Activated CD4-positive, alpha-beta T cell treated with anti-CD3 and anti-CD28 coated beads for 36 hours (primary cell): ENCODE measurements at regions of chrX and their contacts with region 1.

Region 1: GRCh38 chrX:100768679-100769338 is 36.9 kb upstream of the SYTL4 start:
- DNase-seq: peak; percentile 89
- ATAC-seq: peak; percentile 49
- H3K4me3 Mint-ChIP-seq: no peak overlapping the region
- H3K27ac Mint-ChIP-seq: no peak overlapping the region
- H3K4me1 Mint-ChIP-seq: no peaks in the 10 kb centered on the region
- H3K27me3 Mint-ChIP-seq: peaks cover 3% of the 10 kb centered on the region

Region 2: DNA sequence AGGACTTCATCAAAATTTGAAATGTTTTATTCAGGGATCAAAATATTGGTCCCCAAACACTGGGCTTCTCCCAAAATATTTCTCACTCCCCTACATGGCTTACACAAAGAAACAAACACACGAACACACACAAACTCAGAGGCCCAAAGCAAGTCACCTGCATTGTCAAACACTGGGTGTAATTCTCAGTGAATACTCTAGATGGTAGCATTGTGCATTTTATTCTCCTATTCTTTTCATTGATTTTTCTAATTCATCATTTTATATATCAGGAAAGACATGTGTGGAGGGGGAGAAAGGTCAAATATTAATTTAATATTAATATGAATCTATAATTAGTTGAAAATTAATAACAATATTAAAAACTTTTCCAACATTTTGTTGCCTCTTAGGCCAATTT is 256.3 kb before region 1 on chrX:
- CTCF ChIA-PET with region 1: interaction called, 12 read pairs
- POLR2A ChIA-PET with region 1: no interaction called
- intact Hi-C with region 1: loop called in 1 of 2 experiments (anchors 2 kb)
- DNase-seq: no peak
- ATAC-seq: no peak
- H3K4me3 Mint-ChIP-seq: no peak overlapping the region
- H3K27ac Mint-ChIP-seq: no peak overlapping the region
- H3K4me1 Mint-ChIP-seq: no peaks in the 10 kb centered on the region
- H3K27me3 Mint-ChIP-seq: peaks cover 4% of the 10 kb centered on the region

Region 3: GRCh38 chrX:100685284-100685996 is 83.4 kb before region 1 on chrX:
- CTCF ChIA-PET with region 1: interaction called, 134 read pairs
- POLR2A ChIA-PET with region 1: no interaction called
- intact Hi-C with region 1: loop called (anchors 1 kb)
- DNase-seq: peak; percentile 75
- ATAC-seq: peak; percentile 84
- H3K4me3 Mint-ChIP-seq: no peak overlapping the region
- H3K27ac Mint-ChIP-seq: no peak overlapping the region
- H3K4me1 Mint-ChIP-seq: peaks cover 13% of the 10 kb centered on the region
- H3K27me3 Mint-ChIP-seq: peaks cover 3% of the 10 kb centered on the region

Region 4: GRCh38 chrX:101040197-101040596 is 271.4 kb after region 1 on chrX:
- CTCF ChIA-PET with region 1: no interaction called
- POLR2A ChIA-PET with region 1: no interaction called
- intact Hi-C with region 1: no loop called
- DNase-seq: peak; percentile 5
- ATAC-seq: peak; percentile 84
- H3K4me3 Mint-ChIP-seq: no peak overlapping the region
- H3K27ac Mint-ChIP-seq: no peak overlapping the region
- H3K4me1 Mint-ChIP-seq: peaks cover 6% of the 10 kb centered on the region
- H3K27me3 Mint-ChIP-seq: no peaks in the 10 kb centered on the region

Region 5: GRCh38 chrX:101062176-101062575 is 293.4 kb after region 1 on chrX:
- CTCF ChIA-PET with region 1: no interaction called
- POLR2A ChIA-PET with region 1: no interaction called
- intact Hi-C with region 1: no loop called
- DNase-seq: no peak
- ATAC-seq: no peak
- H3K4me3 Mint-ChIP-seq: no peak overlapping the region
- H3K27ac Mint-ChIP-seq: no peak overlapping the region
- H3K4me1 Mint-ChIP-seq: peaks cover 1% of the 10 kb centered on the region
- H3K27me3 Mint-ChIP-seq: no peaks in the 10 kb centered on the region